ENCODE measurements at regions of chr1 and their contacts with region 1.

Region 1: GRCh38 chr1:172826096-172826743 is 167.3 kb downstream of the FASLG start:
- DNase-seq: no peak
- H3K4me3 ChIP-seq: peak overlapping the region; percentile 39
- H3K27ac ChIP-seq: peak overlapping the region; percentile 76
- H3K4me1 ChIP-seq: peaks cover 8% of the 10 kb centered on the region
- H3K27me3 ChIP-seq: no peaks in the 10 kb centered on the region
- CTCF ChIP-seq: peak; percentile 74

Region 2: GRCh38 chr1:173202430-173203145 is 376.4 kb after region 1 on chr1:
- intact Hi-C with region 1: loop called (anchors 5 kb)
- DNase-seq: no peak
- H3K4me3 ChIP-seq: no peak overlapping the region
- H3K27ac ChIP-seq: no peak overlapping the region
- H3K4me1 ChIP-seq: peaks cover 27% of the 10 kb centered on the region
- H3K27me3 ChIP-seq: no peaks in the 10 kb centered on the region
- CTCF ChIP-seq: peak; percentile 76